Mammary epithelial cell (primary cell): ENCODE measurements at regions of chr12 and their contacts with region 1.

Region 1: GRCh38 chr12:4030929-4031702 is 157.9 kb upstream of the PARP11 start:
- DNase-seq: peak; percentile 99
- H3K4me3 ChIP-seq: peak overlapping the region in 1 of 3 experiments; percentile 25
- H3K27ac ChIP-seq: peak overlapping the region; percentile 91
- H3K4me1 ChIP-seq: peaks cover 42% of the 10 kb centered on the region
- H3K27me3 ChIP-seq: no peaks in the 10 kb centered on the region
- CTCF ChIP-seq: no peak

Region 2: DNA sequence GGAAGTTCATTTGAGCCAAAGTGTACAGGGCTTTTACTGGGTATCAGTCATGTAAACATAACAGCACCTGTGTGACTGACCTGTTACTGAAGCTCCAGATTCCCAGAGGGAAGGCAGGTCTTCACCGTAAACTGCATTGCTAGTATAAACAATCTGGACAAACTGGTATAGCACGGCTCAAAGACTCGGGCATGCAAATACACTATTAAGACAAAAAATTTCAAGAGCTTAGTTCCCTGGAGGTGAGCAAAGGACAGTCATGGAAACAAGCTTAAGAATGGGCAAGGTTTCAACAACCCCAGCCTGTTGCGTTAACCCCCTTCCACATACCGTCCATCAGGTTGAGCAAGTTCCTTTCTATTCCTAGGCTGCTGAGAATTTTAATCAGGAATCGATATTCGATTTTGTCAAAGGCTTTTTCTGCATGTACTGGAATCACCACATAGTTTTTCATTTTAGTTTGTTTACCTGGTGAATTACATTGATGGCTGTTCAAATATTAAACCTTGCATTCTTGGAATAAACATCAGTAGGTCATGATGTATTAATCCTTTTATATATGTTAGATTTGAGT is 167.3 kb before region 1 on chr12:
- CTCF ChIA-PET with region 1: no interaction called
- dilution Hi-C with region 1: no loop called
- in situ Hi-C with region 1: no loop called
- intact Hi-C with region 1: no loop called
- DNase-seq: no peak
- H3K4me3 ChIP-seq: no peak overlapping the region
- H3K27ac ChIP-seq: no peak overlapping the region
- H3K4me1 ChIP-seq: no peaks in the 10 kb centered on the region
- H3K27me3 ChIP-seq: no peaks in the 10 kb centered on the region
- CTCF ChIP-seq: no peak

Region 3: DNA sequence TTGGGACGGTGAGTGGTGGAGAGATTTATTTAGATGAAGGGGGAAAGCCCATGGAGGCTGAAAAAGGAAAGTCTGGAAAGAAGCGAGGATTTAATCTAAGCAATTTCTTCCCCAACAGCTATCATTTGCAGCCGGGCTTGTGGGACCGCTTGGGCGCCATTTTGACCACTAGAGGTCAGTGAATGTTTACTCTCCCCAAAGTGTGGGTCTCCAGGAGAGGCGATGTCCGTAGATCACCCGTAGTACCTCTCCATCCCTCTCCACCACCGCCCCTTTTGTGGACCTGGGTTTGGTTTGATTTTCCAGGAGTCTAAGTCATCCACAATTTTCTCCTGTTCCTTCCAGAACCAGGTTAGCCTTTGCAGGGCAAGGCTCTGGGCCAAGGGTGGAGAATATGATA is 66.7 kb before region 1 on chr12:
- CTCF ChIA-PET with region 1: no interaction called
- dilution Hi-C with region 1: no loop called
- in situ Hi-C with region 1: no loop called
- intact Hi-C with region 1: no loop called
- DNase-seq: no peak
- H3K4me3 ChIP-seq: no peak overlapping the region
- H3K27ac ChIP-seq: no peak overlapping the region
- H3K4me1 ChIP-seq: no peaks in the 10 kb centered on the region
- H3K27me3 ChIP-seq: no peaks in the 10 kb centered on the region
- CTCF ChIP-seq: peak in 1 of 2 donors; percentile 11

Region 4: GRCh38 chr12:3998968-3999826 is 31.9 kb before region 1 on chr12:
- CTCF ChIA-PET with region 1: no interaction called
- dilution Hi-C with region 1: no loop called
- in situ Hi-C with region 1: loop called (anchors 5 kb)
- intact Hi-C with region 1: loop called (anchors 1 kb)
- DNase-seq: peak; percentile 96
- H3K4me3 ChIP-seq: no peak overlapping the region
- H3K27ac ChIP-seq: peak overlapping the region; percentile 90
- H3K4me1 ChIP-seq: peaks cover 34% of the 10 kb centered on the region
- H3K27me3 ChIP-seq: no peaks in the 10 kb centered on the region
- CTCF ChIP-seq: no peak

Region 5: GRCh38 chr12:4011597-4011996 is 19.5 kb before region 1 on chr12:
- CTCF ChIA-PET with region 1: interaction called, 7 read pairs
- dilution Hi-C with region 1: no loop called
- in situ Hi-C with region 1: no loop called
- intact Hi-C with region 1: loop called (anchors 1 kb)
- DNase-seq: peak; percentile 97
- H3K4me3 ChIP-seq: no peak overlapping the region
- H3K27ac ChIP-seq: peak overlapping the region; percentile 90
- H3K4me1 ChIP-seq: peaks cover 31% of the 10 kb centered on the region
- H3K27me3 ChIP-seq: no peaks in the 10 kb centered on the region
- CTCF ChIP-seq: no peak

Region 6: DNA sequence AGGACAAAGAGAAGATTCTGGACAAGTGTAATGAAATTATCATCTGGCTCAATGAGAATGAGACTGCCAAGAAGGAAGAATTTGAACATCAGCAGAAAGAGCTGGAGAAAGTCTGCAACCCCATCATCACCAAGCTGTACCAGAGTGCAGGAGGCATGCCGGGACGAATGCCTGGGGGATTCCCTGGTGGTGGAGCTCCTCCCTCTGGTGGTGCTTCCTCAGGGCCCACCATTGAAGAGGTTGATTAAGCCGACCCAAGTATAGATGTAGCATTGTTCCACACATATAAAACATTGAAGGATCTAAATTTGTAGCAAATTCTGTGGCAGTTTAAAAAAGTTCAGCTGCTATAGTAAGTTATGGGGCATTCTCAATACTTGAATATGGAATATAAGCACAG is 68.2 kb after region 1 on chr12:
- CTCF ChIA-PET with region 1: no interaction called
- dilution Hi-C with region 1: no loop called
- in situ Hi-C with region 1: no loop called
- intact Hi-C with region 1: no loop called
- DNase-seq: no peak
- H3K4me3 ChIP-seq: no peak overlapping the region
- H3K27ac ChIP-seq: no peak overlapping the region
- H3K4me1 ChIP-seq: no peaks in the 10 kb centered on the region
- H3K27me3 ChIP-seq: no peaks in the 10 kb centered on the region
- CTCF ChIP-seq: no peak